Activated CD4-positive, alpha-beta memory T cell treated with anti-CD3 and anti-CD28 coated beads for 36 hours (primary cell): ENCODE measurements at regions of chr19 and their contacts with region 1.

Region 1: DNA sequence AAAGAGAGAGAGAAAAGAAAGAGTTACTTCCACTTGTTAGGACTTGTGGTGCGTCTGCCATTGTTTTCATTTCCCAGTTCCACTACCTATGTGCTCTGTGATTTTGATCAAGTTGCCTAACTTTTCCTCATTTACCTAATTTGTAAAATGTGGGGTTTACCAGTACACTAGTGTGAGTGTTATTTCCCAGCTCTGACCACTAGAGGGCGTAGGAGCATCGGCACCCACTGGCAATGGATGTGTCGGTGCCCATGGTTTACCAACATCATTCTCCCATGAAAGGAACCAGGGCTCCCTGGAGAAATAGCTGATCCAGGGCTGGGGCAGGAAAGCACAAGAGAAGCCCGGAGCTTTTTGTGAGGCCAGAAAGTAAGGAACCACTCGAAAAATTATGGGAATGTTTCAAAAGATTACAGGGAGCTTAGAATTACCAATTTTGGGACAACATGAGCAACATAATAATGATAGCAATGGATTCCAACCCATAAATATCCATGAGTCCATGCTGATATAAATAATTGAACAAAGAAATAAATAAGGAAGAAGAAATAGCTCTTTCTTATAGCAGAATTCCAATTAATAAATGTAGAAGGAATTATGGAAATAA is 15.1 kb upstream of the CEACAM4 start:
- DNase-seq: peak; percentile 74
- H3K4me3 Mint-ChIP-seq: no peak overlapping the region
- H3K27ac Mint-ChIP-seq: no peak overlapping the region
- H3K4me1 Mint-ChIP-seq: peaks cover 6% of the 10 kb centered on the region
- H3K27me3 Mint-ChIP-seq: peaks cover 11% of the 10 kb centered on the region

Region 2: DNA sequence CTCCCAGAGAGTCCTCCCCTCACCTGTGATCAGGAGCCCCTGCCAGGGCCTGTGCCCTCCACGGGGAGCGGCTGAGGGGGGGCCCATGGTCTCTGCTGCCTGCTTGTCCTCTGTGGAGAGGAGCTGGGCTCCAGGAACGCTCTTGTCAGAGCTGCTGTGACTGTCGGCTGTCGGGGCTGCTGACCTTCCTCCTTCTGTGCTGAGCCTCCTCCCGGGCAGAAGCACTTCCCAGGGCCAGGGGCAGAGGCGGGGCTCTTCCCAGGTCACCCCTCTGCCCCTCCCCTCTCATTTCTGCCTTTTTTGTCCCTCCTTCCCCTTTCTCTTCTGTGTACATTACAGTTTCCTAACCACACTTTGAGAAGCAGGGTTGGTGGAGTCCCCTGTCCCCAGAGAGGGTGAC is 15.1 kb before region 1 on chr19 and contains the start of gene CEACAM4:
- CTCF ChIA-PET with region 1: interaction called, 15 read pairs
- POLR2A ChIA-PET with region 1: no interaction called
- intact Hi-C with region 1: no loop called
- DNase-seq: no peak
- H3K4me3 Mint-ChIP-seq: no peak within 1 kb of the TSS
- H3K27ac Mint-ChIP-seq: no peak within 1 kb of the TSS
- H3K4me1 Mint-ChIP-seq: no peaks in the 10 kb centered on the region
- H3K27me3 Mint-ChIP-seq: peaks cover 35% of the 10 kb centered on the region
- total RNA-seq, gene CEACAM4: not detected

Region 3: DNA sequence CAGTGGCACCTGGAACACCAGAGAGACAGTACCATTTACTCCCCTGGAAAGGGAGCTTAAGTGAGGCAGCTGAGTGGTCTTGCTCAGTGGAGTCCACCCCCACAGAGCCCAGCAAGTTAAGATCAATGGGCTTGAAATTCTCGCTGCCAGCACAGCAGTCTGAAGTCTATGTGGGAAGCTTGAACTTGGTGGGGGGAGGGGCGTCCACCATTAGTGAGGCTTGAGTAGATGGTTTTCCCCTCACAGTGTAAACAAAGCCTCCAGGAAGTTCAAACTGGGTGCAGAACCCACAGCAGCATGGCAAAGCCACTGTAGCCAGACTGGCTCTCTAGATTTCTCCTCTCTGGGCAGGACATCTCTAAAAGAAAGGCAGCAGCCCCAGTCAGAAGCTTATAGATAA is 15.2 kb after region 1 on chr19:
- CTCF ChIA-PET with region 1: interaction called, 90 read pairs
- POLR2A ChIA-PET with region 1: no interaction called
- intact Hi-C with region 1: no loop called
- DNase-seq: no peak
- H3K4me3 Mint-ChIP-seq: no peak overlapping the region
- H3K27ac Mint-ChIP-seq: no peak overlapping the region
- H3K4me1 Mint-ChIP-seq: peaks cover 14% of the 10 kb centered on the region
- H3K27me3 Mint-ChIP-seq: peaks cover 33% of the 10 kb centered on the region

Region 4: GRCh38 chr19:41691268-41691970 is 49.4 kb after region 1 on chr19:
- CTCF ChIA-PET with region 1: interaction called, 64 read pairs
- POLR2A ChIA-PET with region 1: no interaction called
- intact Hi-C with region 1: loop called (anchors 5 kb)
- DNase-seq: peak; percentile 34
- H3K4me3 Mint-ChIP-seq: no peak overlapping the region
- H3K27ac Mint-ChIP-seq: no peak overlapping the region
- H3K4me1 Mint-ChIP-seq: no peaks in the 10 kb centered on the region
- H3K27me3 Mint-ChIP-seq: peaks cover 31% of the 10 kb centered on the region

Region 5: DNA sequence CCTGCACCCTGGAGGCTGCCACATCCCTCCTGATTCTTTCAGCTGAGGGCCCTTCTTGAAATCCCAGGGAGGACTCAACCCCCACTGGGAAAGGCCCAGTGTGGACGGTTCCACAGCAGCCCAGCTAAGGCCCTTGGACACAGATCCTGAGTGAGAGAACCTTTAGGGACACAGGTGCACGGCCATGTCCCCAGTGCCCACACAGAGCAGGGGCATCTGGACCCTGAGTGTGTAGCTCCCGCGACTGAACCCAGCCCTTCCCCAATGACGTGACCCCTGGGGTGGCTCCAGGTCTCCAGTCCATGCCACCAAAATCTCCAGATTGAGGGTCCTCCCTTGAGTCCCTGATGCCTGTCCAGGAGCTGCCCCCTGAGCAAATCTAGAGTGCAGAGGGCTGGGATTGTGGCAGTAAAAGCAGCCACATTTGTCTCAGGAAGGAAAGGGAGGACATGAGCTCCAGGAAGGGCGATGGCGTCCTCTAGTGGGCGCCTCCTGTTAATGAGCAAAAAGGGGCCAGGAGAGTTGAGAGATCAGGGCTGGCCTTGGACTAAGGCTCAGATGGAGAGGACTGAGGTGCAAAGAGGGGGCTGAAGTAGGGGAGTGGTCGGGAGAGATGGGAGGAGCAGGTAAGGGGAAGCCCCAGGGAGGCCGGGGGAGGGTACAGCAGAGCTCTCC is 59.6 kb after region 1 on chr19:
- CTCF ChIA-PET with region 1: interaction called, 23 read pairs
- POLR2A ChIA-PET with region 1: no interaction called
- intact Hi-C with region 1: no loop called
- DNase-seq: no peak
- H3K4me3 Mint-ChIP-seq: no peak overlapping the region
- H3K27ac Mint-ChIP-seq: no peak overlapping the region
- H3K4me1 Mint-ChIP-seq: peaks cover 3% of the 10 kb centered on the region
- H3K27me3 Mint-ChIP-seq: peaks cover 28% of the 10 kb centered on the region

Region 6: GRCh38 chr19:41746593-41747227 is 104.7 kb after region 1 on chr19:
- CTCF ChIA-PET with region 1: interaction called, 40 read pairs
- POLR2A ChIA-PET with region 1: no interaction called
- intact Hi-C with region 1: loop called (anchors 5 kb)
- DNase-seq: peak; percentile 66
- H3K4me3 Mint-ChIP-seq: no peak overlapping the region
- H3K27ac Mint-ChIP-seq: no peak overlapping the region
- H3K4me1 Mint-ChIP-seq: no peaks in the 10 kb centered on the region
- H3K27me3 Mint-ChIP-seq: peaks cover 52% of the 10 kb centered on the region